Heart right ventricle (tissue), 16 donors: ENCODE measurements at regions of chr12 and their contacts with region 1.

Region 1: GRCh38 chr12:47753034-47754001 is 5.4 kb downstream of the RAPGEF3 start:
- DNase-seq: peak; percentile 84 to 87
- ATAC-seq: peak; percentile 76 to 94 (median 90)
- H3K4me3 ChIP-seq: peak overlapping the region in 6 of 10 donors; percentile 6 to 60 (median 12)
- H3K27ac ChIP-seq: peak overlapping the region; percentile 71 to 91 (median 86)
- H3K4me1 ChIP-seq: peaks cover 37 to 75% (median 59%) of the 10 kb centered on the region in 9 donors
- H3K27me3 ChIP-seq: no peaks in the 10 kb centered on the region
- CTCF ChIP-seq: no peak

Region 2: DNA sequence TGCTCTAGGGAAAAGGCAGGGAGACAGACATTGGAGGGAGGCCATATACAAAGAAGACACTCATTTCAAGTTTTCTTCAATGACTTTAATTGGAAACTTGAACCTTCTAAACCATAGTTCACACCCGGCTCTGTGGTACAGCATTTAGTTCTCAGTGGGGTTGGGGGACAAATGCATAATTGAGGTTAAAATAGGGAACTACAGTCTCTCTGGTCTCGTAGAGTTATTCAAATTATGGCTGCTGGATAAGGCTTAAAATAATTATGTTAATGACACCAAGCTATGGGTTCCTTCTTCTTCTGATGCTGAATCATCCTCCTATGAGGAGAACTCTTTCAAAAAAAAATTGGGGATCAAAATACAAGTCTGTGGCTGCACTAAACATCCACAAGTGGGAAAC is 43.6 kb before region 1 on chr12:
- intact Hi-C with region 1: no loop called
- DNase-seq: no peak
- ATAC-seq: no peak
- H3K4me3 ChIP-seq: no peak overlapping the region
- H3K27ac ChIP-seq: peak overlapping the region in 1 of 10 donors; percentile 31
- H3K4me1 ChIP-seq: peaks cover 3 to 49% (median 11%) of the 10 kb centered on the region in 9 donors
- H3K27me3 ChIP-seq: no peaks in the 10 kb centered on the region
- CTCF ChIP-seq: no peak

Region 3: DNA sequence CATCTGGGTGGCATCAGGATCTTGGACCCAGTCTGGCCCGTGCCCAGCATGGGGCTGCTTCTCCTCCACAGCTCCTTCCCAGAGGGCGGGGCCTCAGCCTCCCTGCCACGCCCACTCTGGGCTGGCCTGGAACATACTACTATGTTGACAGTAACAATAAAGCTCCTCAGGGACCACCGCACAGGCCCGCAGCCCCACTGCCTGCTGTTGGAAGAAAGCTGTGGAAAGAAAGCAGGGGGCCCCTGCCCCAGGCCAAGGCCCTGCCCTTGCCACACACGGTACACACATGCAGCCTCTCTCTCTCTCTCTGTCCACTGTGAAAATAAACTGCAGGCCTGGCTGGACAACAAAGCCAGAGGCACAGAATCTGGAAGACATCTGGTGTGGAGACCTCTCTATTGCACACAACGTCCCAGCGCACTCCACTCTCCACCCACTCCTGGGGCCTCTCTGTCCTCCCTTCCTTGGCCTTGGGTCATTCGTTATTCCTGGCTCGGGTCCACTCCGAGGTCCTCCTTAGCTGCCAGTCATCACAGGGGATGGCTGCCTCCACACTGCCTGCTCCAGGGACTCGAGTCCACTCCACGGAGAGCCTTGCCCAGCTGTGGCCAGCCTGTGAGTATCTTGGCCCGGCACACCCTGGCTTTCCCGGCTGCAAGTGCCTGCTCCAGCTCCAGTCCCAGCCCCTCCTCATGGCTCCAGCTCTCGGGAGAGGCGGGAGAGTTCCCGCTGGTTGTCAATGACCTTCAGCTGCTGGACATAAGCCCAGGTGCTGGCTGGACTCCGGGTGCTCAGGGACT is 16.2 kb before region 1 on chr12:
- intact Hi-C with region 1: loop called in 2 of 10 experiments (anchors 1 to 2 kb)
- DNase-seq: peak; percentile 90 to 91
- ATAC-seq: peak; percentile 77 to 89 (median 82)
- H3K4me3 ChIP-seq: peak overlapping the region in 5 of 10 donors; percentile 1 to 18 (median 8)
- H3K27ac ChIP-seq: peak overlapping the region; percentile 76 to 93 (median 86)
- H3K4me1 ChIP-seq: peaks cover 47 to 94% (median 84%) of the 10 kb centered on the region in 9 donors
- H3K27me3 ChIP-seq: no peaks in the 10 kb centered on the region
- CTCF ChIP-seq: no peak

Region 4: GRCh38 chr12:47742253-47742825 is 11.0 kb before region 1 on chr12:
- intact Hi-C with region 1: loop called in 2 of 10 experiments (anchors 1 to 2 kb)
- DNase-seq: peak; percentile 45 to 63
- ATAC-seq: no peak
- H3K4me3 ChIP-seq: no peak overlapping the region
- H3K27ac ChIP-seq: peak overlapping the region in 1 of 10 donors; percentile 78
- H3K4me1 ChIP-seq: peaks cover 21 to 65% (median 42%) of the 10 kb centered on the region in 9 donors
- H3K27me3 ChIP-seq: peaks cover 0 to 5% (median 0%) of the 10 kb centered on the region in 7 donors
- CTCF ChIP-seq: peak; percentile 85 to 95 (median 89)

Region 5: DNA sequence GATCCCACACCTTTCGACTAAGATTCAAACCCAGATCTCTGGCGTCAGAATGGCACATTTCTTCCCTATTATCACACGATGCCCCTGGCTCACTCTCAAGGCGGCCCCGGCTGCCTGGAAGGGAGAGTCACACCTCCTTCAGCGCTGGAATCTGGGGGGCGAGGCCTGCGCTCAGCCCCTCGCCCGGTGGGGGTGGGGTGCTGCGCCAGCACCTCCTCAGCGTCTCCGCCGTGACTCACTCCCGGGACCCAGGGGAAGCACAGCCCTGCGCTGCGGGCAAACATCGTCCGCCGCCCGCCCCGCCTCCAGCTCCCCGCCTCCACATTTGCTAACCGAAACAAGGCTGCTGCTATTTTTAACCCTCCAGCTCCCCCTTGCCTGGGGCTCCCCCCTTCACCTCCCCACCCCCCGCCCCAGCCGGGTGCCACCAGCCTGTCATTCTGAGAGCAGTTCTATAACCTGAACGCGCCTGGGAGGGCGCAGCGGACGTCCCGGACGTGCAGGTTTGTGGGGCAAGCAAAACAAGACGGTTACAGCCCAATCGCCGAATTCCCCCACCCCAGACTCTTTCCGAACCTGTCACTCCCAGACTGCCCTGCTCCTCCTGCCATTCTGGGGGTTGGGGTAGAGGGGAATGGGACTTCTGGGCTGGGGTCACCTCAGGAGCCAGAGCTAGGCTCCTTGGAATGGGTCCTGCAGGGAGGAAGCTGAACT is 59.6 kb after region 1 on chr12:
- intact Hi-C with region 1: no loop called
- DNase-seq: peak; percentile 90 to 92
- ATAC-seq: peak; percentile 65 to 87 (median 82)
- H3K4me3 ChIP-seq: peak overlapping the region in 9 of 10 donors; percentile 20 to 55 (median 44)
- H3K27ac ChIP-seq: peak overlapping the region; percentile 93 to 100 (median 98)
- H3K4me1 ChIP-seq: peaks cover 72 to 100% (median 99%) of the 10 kb centered on the region in 9 donors
- H3K27me3 ChIP-seq: no peaks in the 10 kb centered on the region
- CTCF ChIP-seq: peak in 2 of 9 donors; percentile 5 to 16